Activated T-helper 1 cell treated with anti-CD3 and anti-CD28 coated beads, Interleukin-12 subunit alpha, Interleukin-12 subunit beta, Interleukin-2, Interleukin-4 antibody, amounts not matched to agents 30 ng/mL and 10 ng/mL and 1 ng/mL, durations not matched to agents 14 hours and 24 hours and 36 hours (primary cell): ENCODE measurements at regions of chr12 and their contacts with region 1.

Region 1: GRCh38 chr12:39319187-39319586 is 123.7 kb downstream of the KIF21A start:
- DNase-seq: no peak
- H3K4me3 Mint-ChIP-seq: no peak overlapping the region
- H3K27ac Mint-ChIP-seq: no peak overlapping the region
- H3K4me1 Mint-ChIP-seq: peaks cover 4% of the 10 kb centered on the region
- H3K27me3 Mint-ChIP-seq: no peaks in the 10 kb centered on the region

Region 2: DNA sequence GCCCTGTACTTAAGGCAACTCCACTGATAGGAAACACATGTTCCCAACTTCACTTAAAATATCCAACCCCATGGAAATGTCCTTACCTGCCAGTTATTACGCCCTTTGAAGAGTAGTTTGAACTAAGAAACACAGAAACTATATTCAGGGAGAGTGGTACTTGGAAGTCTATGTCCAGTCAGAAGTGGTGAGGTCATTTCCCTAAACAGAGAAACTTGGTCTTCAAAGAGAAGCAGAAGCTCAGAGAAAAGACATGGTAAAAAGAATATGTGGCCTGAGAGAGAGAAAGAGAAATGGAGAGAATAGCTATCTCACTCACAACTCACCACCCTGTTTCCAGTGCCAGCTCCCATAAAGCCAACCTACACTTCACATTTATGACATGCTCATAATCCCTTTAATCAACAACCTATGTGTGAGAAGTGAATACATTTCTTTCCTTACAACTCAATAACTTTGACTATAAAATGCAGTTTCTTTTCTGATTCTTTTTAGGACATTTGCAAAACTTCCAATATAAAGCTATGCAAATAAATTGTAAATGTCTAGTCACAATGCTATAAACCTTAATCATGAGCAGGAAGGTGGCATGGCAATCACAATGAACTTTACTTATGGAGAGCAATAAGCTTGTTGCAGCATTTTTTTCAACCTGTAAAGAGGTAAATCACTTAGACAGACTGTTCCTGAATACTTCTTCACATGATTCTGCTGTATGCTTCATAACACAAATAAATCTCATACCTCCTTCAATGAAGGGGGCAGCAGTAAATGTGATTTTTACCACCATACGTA is 480.9 kb before region 1 on chr12:
- intact Hi-C with region 1: no loop called
- DNase-seq: no peak
- H3K4me3 Mint-ChIP-seq: no peak overlapping the region
- H3K27ac Mint-ChIP-seq: no peak overlapping the region
- H3K4me1 Mint-ChIP-seq: no peaks in the 10 kb centered on the region
- H3K27me3 Mint-ChIP-seq: no peaks in the 10 kb centered on the region

Region 3: GRCh38 chr12:39145175-39145999 is 173.8 kb before region 1 on chr12:
- intact Hi-C with region 1: no loop called
- DNase-seq: peak; percentile 19
- H3K4me3 Mint-ChIP-seq: peak overlapping the region; percentile 31
- H3K27ac Mint-ChIP-seq: no peak overlapping the region
- H3K4me1 Mint-ChIP-seq: no peaks in the 10 kb centered on the region
- H3K27me3 Mint-ChIP-seq: peaks cover 25% of the 10 kb centered on the region

Region 4: GRCh38 chr12:39252628-39253027 is 66.6 kb before region 1 on chr12:
- intact Hi-C with region 1: no loop called
- DNase-seq: no peak
- H3K4me3 Mint-ChIP-seq: no peak overlapping the region
- H3K27ac Mint-ChIP-seq: no peak overlapping the region
- H3K4me1 Mint-ChIP-seq: no peaks in the 10 kb centered on the region
- H3K27me3 Mint-ChIP-seq: peaks cover 5% of the 10 kb centered on the region

Region 5: GRCh38 chr12:39300799-39301198 is 18.4 kb before region 1 on chr12:
- intact Hi-C with region 1: no loop called
- DNase-seq: no peak
- H3K4me3 Mint-ChIP-seq: no peak overlapping the region
- H3K27ac Mint-ChIP-seq: no peak overlapping the region
- H3K4me1 Mint-ChIP-seq: no peaks in the 10 kb centered on the region
- H3K27me3 Mint-ChIP-seq: no peaks in the 10 kb centered on the region

Region 6: GRCh38 chr12:39587225-39587624 is 268.0 kb after region 1 on chr12:
- intact Hi-C with region 1: loop called (anchors 10 kb)
- DNase-seq: no peak
- H3K4me3 Mint-ChIP-seq: no peak overlapping the region
- H3K27ac Mint-ChIP-seq: no peak overlapping the region
- H3K4me1 Mint-ChIP-seq: peaks cover 16% of the 10 kb centered on the region
- H3K27me3 Mint-ChIP-seq: no peaks in the 10 kb centered on the region

Region 7: GRCh38 chr12:39692258-39692853 is 373.2 kb after region 1 on chr12:
- intact Hi-C with region 1: loop called (anchors 1 kb)
- DNase-seq: no peak
- H3K4me3 Mint-ChIP-seq: no peak overlapping the region
- H3K27ac Mint-ChIP-seq: no peak overlapping the region
- H3K4me1 Mint-ChIP-seq: peaks cover 2% of the 10 kb centered on the region
- H3K27me3 Mint-ChIP-seq: peaks cover 4% of the 10 kb centered on the region

Region 8: DNA sequence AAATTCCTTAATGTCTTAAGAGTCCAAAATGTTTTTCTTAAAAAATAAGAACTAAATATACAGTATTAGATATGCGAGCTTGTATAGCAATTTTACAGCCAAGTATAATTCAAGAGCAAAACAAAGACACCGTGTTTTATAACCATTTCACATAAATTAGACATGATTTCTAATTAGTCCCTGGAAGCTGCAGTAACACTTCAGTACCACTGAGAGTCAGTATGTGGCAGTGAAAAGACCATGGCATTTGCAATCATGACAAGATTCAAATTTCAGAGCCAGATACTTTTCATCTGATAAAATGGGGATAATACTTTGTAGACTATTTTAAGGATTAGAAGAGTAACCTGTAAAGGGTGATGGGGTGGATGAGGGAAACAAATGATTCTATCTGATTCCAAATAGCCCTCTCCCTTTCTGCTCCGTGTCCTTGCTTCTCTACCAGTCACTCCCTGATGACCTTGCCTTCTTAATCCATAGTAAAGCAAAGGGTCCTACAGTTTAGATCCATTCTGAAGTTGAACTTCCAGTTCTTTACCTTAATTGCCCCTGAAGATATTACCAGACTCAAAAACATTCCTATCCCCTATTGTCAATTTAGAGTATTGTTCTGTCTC is 445.9 kb after region 1 on chr12:
- intact Hi-C with region 1: loop called (anchors 5 kb)
- DNase-seq: no peak
- H3K4me3 Mint-ChIP-seq: no peak overlapping the region
- H3K27ac Mint-ChIP-seq: no peak overlapping the region
- H3K4me1 Mint-ChIP-seq: no peaks in the 10 kb centered on the region
- H3K27me3 Mint-ChIP-seq: no peaks in the 10 kb centered on the region

Region 9: GRCh38 chr12:39990122-39991101 is 671.2 kb after region 1 on chr12:
- intact Hi-C with region 1: loop called (anchors 1 kb)
- DNase-seq: peak; percentile 13
- H3K4me3 Mint-ChIP-seq: no peak overlapping the region
- H3K27ac Mint-ChIP-seq: no peak overlapping the region
- H3K4me1 Mint-ChIP-seq: no peaks in the 10 kb centered on the region
- H3K27me3 Mint-ChIP-seq: peaks cover 2% of the 10 kb centered on the region